PC-3 (cell line): ENCODE measurements at regions of chr17 and their contacts with region 1.

Region 1: GRCh38 chr17:77429919-77430752 is 289.4 kb downstream of the SEC14L1 start:
- DNase-seq: peak; percentile 91
- ATAC-seq: peak; percentile 21
- H3K4me3 ChIP-seq: no peak overlapping the region
- H3K27ac ChIP-seq: peak overlapping the region; percentile 32; the same call in 1 of the 2 replicates
- H3K4me1 ChIP-seq: peaks cover 50% of the 10 kb centered on the region
- H3K27me3 ChIP-seq: no peaks in the 10 kb centered on the region
- CTCF ChIP-seq: peak; percentile 93

Region 2: GRCh38 chr17:77390870-77391269 is 39.3 kb before region 1 on chr17:
- CTCF ChIA-PET with region 1: interaction called, 10 read pairs
- POLR2A ChIA-PET with region 1: no interaction called
- intact Hi-C with region 1: no loop called
- DNase-seq: no peak
- ATAC-seq: no peak
- H3K4me3 ChIP-seq: no peak overlapping the region
- H3K27ac ChIP-seq: peak overlapping the region; percentile 86
- H3K4me1 ChIP-seq: peaks cover 40% of the 10 kb centered on the region
- H3K27me3 ChIP-seq: no peaks in the 10 kb centered on the region
- CTCF ChIP-seq: no peak

Region 3: DNA sequence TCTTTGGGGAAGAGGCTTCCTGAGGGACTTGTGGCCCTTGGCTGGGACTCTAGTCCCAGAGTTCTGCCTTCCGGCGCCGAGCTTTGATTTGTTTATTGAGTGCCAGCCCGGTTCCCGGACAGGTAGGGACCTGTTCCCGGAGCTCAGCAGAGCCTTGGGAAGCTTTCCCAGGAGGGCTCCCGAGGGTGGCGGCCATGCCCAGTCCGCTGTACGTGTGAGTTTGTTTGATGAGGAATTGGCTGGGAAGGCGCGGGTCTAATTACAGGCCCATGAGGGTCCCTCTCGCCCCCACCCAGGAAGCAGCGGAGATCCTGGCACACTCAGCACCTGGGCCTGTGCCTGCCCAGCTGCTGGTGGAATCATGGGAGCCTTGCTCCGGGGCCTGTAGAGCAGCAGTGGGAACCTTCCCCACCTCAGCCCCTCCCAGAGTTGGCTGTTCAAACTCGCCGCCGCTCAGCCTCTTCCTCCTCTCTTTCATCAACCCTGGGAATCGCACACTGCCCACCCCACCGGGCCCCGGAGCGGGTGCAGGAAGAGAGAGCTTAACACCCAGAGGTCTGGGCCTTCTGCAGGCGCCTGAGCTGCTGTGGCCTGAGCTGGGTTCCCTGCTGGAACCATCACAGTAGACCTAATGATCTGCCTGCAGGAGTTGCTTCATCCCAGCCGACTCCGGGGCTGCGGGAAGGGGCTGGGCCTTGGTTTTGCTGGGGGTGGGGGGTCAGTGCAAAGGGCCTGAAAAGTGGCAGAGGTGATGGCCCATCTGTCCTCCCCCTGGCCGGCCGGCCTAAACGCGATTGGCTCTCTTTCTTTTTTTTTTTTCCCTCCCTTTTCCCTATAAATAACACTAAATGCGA is 24.3 kb after region 1 on chr17:
- CTCF ChIA-PET with region 1: no interaction called
- POLR2A ChIA-PET with region 1: no interaction called
- intact Hi-C with region 1: no loop called
- DNase-seq: no peak
- ATAC-seq: no peak
- H3K4me3 ChIP-seq: no peak overlapping the region
- H3K27ac ChIP-seq: no peak overlapping the region
- H3K4me1 ChIP-seq: peaks cover 14% of the 10 kb centered on the region
- H3K27me3 ChIP-seq: no peaks in the 10 kb centered on the region
- CTCF ChIP-seq: no peak

Region 4: DNA sequence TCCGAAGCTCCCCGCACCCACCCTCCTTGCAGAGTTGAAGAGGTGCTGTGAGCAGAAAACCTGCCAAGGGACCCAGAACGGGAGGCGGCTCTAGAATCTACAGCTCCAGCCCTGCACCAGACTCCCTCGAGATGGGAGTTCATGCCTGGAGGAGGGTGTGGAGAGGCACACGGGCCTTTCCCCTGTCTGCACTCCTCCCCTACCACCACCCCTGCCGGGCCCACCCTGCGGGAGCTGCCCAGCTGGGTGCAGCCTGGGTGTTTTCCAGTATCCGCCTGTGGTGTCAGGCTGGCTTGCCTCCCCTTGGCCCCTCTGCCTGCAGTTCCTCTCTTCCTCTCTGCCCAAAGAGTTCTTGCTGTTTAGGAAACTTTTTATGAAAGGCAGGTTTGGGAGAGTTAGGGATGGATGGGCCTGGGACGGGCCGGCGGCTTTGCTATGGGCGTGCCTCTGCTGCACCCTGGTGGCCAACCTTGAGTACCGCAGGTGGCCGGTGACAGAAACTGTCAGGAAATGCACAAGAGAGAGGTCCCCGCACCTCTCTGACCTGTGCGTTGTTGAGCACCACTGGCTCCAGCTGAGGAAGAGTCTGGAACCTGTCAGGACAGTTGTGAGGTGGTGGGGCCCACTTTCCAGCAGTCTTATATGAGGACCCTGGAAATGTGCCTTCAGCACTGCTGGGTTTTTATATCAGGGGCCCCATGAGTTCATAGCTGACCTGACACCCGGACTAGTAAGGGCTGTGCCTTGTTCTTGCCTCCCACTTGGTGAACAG is 64.7 kb after region 1 on chr17:
- CTCF ChIA-PET with region 1: interaction called, 11 read pairs
- POLR2A ChIA-PET with region 1: no interaction called
- intact Hi-C with region 1: loop called (anchors 5 kb)
- DNase-seq: peak; percentile 83
- ATAC-seq: peak; percentile 77
- H3K4me3 ChIP-seq: no peak overlapping the region
- H3K27ac ChIP-seq: no peak overlapping the region
- H3K4me1 ChIP-seq: no peaks in the 10 kb centered on the region
- H3K27me3 ChIP-seq: no peaks in the 10 kb centered on the region
- CTCF ChIP-seq: peak; percentile 99